ENCODE measurements at regions of chr5 and their contacts with region 1.

Region 1: DNA sequence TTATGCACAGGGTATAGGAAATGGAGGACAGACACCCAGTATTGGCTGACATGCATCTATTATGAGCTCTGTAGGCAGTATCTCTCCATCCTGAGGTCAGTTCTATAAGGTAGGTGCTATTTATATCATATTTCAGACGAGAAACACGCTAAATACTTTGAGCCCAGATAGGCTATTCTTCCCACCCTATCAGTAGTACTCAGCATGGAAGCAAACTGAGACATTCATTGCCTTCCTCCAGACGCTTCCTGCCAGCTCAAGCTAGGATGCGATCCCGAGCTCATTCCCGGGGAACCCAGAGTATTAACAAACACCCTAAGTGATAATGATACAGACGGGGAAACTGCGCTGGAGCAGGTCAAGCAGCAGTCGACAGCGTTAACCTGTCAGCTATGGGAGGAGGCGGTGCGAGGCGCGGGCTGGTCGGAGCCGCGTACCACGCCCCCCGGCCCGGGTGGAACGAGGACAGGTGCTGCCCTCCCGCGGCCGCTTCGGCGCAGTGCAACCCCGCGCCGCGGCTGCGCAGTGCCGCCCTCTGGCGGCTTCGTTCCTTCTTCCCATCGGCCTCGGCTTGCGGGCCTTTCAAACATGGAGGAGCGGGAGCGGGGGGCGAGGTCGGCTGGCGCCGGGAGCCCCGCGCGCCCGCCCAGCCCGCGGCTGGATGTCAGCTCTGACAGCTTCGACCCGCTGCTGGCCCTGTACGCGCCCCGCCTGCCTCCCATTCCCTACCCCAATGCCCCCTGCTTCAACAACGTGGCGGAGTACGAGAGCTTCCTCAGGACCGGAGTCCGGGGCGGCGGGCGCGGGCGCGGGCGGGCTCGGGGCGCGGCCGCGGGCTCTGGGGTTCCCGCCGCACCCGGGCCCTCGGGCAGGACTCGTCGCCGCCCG is at the start of gene LSM11:
- DNase-seq: peak; percentile 65 to 78
- ATAC-seq: peak; percentile 94
- H3K4me3 ChIP-seq: peak within 1 kb of the TSS; percentile 67 to 91 (median 72)
- H3K27ac ChIP-seq: peak within 1 kb of the TSS in 2 of 4 donors; percentile 46 to 58
- H3K4me1 ChIP-seq: peaks cover 10 to 14% of the 10 kb centered on the region in 2 donors
- H3K27me3 ChIP-seq: no peaks in the 10 kb centered on the region
- CTCF ChIP-seq: peak; percentile 87 to 100 (median 95)
- POLR2A ChIP-seq: no peak
- total RNA-seq, gene LSM11: 0.95 to 1.9 (median 1.2) TPM

Region 2: GRCh38 chr5:157142317-157143126 is 600.9 kb before region 1 on chr5 and contains the start of gene MED7:
- in situ Hi-C with region 1: loop called in 3 of 4 experiments (anchors 10 to 25 kb)
- intact Hi-C with region 1: loop called (anchors 10 kb)
- DNase-seq: peak; percentile 95
- ATAC-seq: peak; percentile 98 to 100
- H3K4me3 ChIP-seq: peak within 1 kb of the TSS; percentile 68 to 96 (median 86)
- H3K27ac ChIP-seq: peak within 1 kb of the TSS; percentile 83 to 90 (median 89)
- H3K4me1 ChIP-seq: peaks cover 10% of the 10 kb centered on the region in 2 donors
- H3K27me3 ChIP-seq: no peaks in the 10 kb centered on the region
- CTCF ChIP-seq: no peak
- POLR2A ChIP-seq: peak; percentile 57 to 76
- total RNA-seq, gene MED7: 7.0 to 9.4 (median 8.5) TPM

Region 3: DNA sequence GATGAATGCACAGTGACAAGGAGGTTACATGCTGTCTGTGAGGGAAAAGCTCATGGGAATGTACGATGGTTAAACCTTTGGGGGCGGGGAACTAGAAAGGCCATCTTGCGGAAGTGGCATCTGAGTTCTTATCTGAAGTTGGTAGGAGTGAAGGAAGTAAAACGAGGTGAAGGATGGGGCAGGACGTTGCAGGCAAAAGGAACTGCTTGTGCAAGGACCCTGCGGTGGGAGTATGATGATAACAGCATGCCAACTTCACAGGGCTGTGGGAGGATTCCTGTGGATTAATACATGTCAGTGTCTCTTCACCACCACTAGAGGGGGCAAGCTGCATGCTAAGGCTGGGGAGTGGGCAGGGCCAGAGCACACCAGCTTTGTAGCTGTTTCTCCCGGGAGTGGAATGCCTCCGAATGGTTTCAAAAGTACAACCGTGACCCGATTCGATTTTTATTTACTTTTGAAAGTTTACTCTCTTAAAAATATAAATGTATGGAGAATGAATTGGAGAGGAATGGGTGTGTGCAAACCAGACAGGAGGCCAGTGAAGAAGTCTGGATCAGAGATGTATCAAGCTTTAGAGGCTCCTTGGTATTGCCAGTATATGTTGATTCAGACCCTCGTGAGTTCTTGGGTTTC is 415.0 kb before region 1 on chr5:
- in situ Hi-C with region 1: no loop called
- intact Hi-C with region 1: loop called (anchors 5 kb)
- DNase-seq: peak; percentile 47 to 48
- ATAC-seq: peak; percentile 90 to 98
- H3K4me3 ChIP-seq: peak overlapping the region in 1 of 4 donors; percentile 7
- H3K27ac ChIP-seq: no peak overlapping the region
- H3K4me1 ChIP-seq: no peaks in the 10 kb centered on the region
- H3K27me3 ChIP-seq: no peaks in the 10 kb centered on the region
- CTCF ChIP-seq: peak; percentile 73 to 92 (median 79)
- POLR2A ChIP-seq: no peak

Region 4: GRCh38 chr5:157431544-157432200 is 311.7 kb before region 1 on chr5:
- in situ Hi-C with region 1: no loop called
- intact Hi-C with region 1: loop called (anchors 10 kb)
- DNase-seq: peak in 1 of 2 donors; percentile 11
- ATAC-seq: peak; percentile 73 to 92
- H3K4me3 ChIP-seq: no peak overlapping the region
- H3K27ac ChIP-seq: no peak overlapping the region
- H3K4me1 ChIP-seq: no peaks in the 10 kb centered on the region
- H3K27me3 ChIP-seq: no peaks in the 10 kb centered on the region
- CTCF ChIP-seq: peak; percentile 32 to 50 (median 43)
- POLR2A ChIP-seq: no peak

Region 5: GRCh38 chr5:157710872-157711271 is 32.5 kb before region 1 on chr5:
- in situ Hi-C with region 1: no loop called
- intact Hi-C with region 1: no loop called
- DNase-seq: no peak
- ATAC-seq: no peak
- H3K4me3 ChIP-seq: no peak overlapping the region
- H3K27ac ChIP-seq: no peak overlapping the region
- H3K4me1 ChIP-seq: no peaks in the 10 kb centered on the region
- H3K27me3 ChIP-seq: no peaks in the 10 kb centered on the region
- CTCF ChIP-seq: no peak
- POLR2A ChIP-seq: no peak

Measured in gastrocnemius medialis (tissue), 4 donors.